Transverse colon (tissue), 4 donors: ENCODE measurements at regions of chr3 and their contacts with region 1.

Region 1: GRCh38 chr3:113211330-113212149 is at the start of gene BOC:
- DNase-seq: no peak
- H3K4me3 ChIP-seq: peak within 1 kb of the TSS; percentile 63 to 85 (median 67)
- H3K27ac ChIP-seq: peak within 1 kb of the TSS; percentile 84 to 96 (median 90)
- H3K4me1 ChIP-seq: peaks cover 0 to 11% (median 5%) of the 10 kb centered on the region in 4 donors
- H3K27me3 ChIP-seq: peaks cover 50% of the 10 kb centered on the region
- CTCF ChIP-seq: no peak
- EP300 ChIP-seq: no peak
- POLR2A ChIP-seq: no peak
- total RNA-seq, gene BOC: 15.2 to 77.4 (median 45.4) TPM

Region 2: GRCh38 chr3:113151461-113152031 is 60.0 kb before region 1 on chr3:
- in situ Hi-C with region 1: no loop called
- intact Hi-C with region 1: loop called (anchors 5 kb)
- DNase-seq: no peak
- H3K4me3 ChIP-seq: no peak overlapping the region
- H3K27ac ChIP-seq: peak overlapping the region; percentile 69 to 87 (median 74)
- H3K4me1 ChIP-seq: peaks cover 4 to 46% (median 26%) of the 10 kb centered on the region in 4 donors
- H3K27me3 ChIP-seq: no peaks in the 10 kb centered on the region
- CTCF ChIP-seq: no peak
- EP300 ChIP-seq: no peak
- POLR2A ChIP-seq: no peak

Region 3: DNA sequence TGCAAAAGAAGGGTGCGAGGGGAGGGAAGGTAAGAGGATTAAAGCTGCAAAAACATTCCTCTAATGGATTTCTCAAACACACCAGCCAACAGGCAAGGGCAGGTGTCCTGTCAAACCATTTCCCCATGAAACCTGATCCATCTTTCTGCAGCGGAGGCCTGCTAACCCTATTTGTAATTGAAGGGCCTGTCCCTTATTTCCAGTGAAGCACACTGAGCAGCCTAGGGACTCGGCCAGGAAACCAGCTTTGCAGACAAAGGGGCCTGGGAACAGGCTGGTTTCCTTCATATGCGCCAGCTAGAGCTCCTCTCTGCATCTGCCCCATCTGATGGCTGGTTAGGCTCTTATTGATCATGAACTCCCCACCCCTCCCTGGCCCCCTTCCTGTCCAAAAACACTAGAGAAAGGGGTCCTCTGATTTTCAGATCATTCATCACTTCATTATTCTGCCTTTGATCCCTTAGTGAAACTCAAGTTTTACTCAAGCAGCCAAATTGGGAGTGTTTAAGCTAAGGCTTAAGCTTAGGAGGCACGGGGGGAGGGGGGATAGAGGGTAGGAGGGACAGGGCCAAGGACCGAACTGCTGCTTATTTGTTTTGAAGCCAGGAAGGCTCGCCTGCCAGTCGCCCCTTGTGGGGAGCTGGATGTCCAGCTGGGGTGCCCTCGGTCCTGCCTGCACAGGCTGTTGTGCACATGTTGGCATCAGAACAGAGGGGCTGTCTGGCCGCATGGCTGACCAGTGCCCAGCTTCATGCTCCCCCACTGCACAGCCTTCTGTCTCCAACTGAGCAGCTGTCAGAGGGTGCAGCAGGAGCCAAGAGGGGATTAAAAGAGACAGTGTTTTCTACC is 53.0 kb after region 1 on chr3:
- in situ Hi-C with region 1: no loop called
- intact Hi-C with region 1: loop called (anchors 10 kb)
- DNase-seq: no peak
- H3K4me3 ChIP-seq: no peak overlapping the region
- H3K27ac ChIP-seq: peak overlapping the region in 1 of 4 donors; percentile 32
- H3K4me1 ChIP-seq: peaks cover 0 to 7% (median 2%) of the 10 kb centered on the region in 4 donors
- H3K27me3 ChIP-seq: no peaks in the 10 kb centered on the region
- CTCF ChIP-seq: no peak
- EP300 ChIP-seq: no peak
- POLR2A ChIP-seq: no peak